CD4-positive, alpha-beta T cell (primary cell): ENCODE measurements at regions of chr12 and their contacts with region 1.

Region 1: GRCh38 chr12:57124259-57124877 is 3.9 kb upstream of the LRP1 start:
- DNase-seq: peak; percentile 56 to 89 (median 70)
- ATAC-seq: peak; percentile 73
- H3K4me3 ChIP-seq: no peak overlapping the region
- H3K4me3 Mint-ChIP-seq: peak overlapping the region; percentile 4
- H3K27ac ChIP-seq: no peak overlapping the region
- H3K27ac Mint-ChIP-seq: no peak overlapping the region
- H3K4me1 ChIP-seq: peaks cover 28% of the 10 kb centered on the region
- H3K4me1 Mint-ChIP-seq: peaks cover 13% of the 10 kb centered on the region
- H3K27me3 ChIP-seq: no peaks in the 10 kb centered on the region
- H3K27me3 Mint-ChIP-seq: no peaks in the 10 kb centered on the region
- CTCF ChIP-seq: peak; percentile 98

Region 2: DNA sequence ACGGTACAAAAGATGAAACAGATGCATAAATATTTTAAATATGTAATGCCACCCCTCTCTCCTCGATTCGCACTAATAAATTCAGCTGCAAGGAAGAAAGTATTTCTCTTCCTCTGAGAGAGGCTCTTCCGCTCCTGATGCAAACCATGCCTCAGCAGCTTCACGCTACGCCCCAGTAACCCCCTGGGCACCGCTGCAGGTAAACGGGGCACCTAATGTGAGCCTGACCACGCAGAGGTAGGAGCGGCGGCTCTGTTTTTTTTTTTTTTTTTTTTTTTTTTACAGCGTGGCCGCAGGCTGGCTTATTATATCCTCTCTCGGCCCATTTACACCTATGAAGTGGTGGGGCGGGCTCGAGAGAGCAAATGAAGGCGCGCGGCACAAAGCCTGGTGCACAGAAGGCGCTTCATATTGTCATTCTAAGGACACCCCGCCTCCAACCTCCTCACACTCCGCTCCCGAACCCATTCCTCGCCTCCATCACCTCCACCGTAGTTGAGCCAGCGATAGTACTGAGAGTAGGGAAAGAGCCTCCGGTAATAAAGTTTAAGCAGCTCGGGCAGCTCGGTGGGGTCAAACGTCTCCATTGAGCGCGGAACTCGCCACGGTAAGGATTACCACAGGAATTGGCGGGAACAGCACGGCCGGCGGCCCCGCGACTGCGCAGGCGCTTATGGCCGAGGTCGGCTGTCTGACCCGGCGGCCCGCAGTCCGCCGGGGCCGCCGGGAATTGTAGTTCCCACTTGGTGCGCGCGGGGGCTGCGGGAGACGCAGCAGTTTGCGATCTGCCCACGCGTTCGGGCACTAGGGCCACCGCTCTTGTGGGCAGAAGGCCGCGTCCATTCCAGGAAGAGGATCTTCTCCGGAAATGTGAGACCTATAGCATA is 372.4 kb before region 1 on chr12 and contains the start of gene PRIM1:
- CTCF ChIA-PET with region 1: no interaction called
- POLR2A ChIA-PET with region 1: no interaction called
- intact Hi-C with region 1: loop called in 1 of 2 experiments (anchors 5 kb)
- DNase-seq: peak; percentile 66 to 91 (median 78)
- ATAC-seq: peak; percentile 80
- H3K4me3 ChIP-seq: peak within 1 kb of the TSS; percentile 96
- H3K4me3 Mint-ChIP-seq: peak within 1 kb of the TSS; percentile 98
- H3K27ac ChIP-seq: peak within 1 kb of the TSS; percentile 68 to 80
- H3K27ac Mint-ChIP-seq: peak within 1 kb of the TSS; percentile 95
- H3K4me1 ChIP-seq: peaks cover 10% of the 10 kb centered on the region
- H3K4me1 Mint-ChIP-seq: peaks cover 33% of the 10 kb centered on the region
- H3K27me3 ChIP-seq: no peaks in the 10 kb centered on the region
- H3K27me3 Mint-ChIP-seq: no peaks in the 10 kb centered on the region
- CTCF ChIP-seq: peak; percentile 41
- total RNA-seq, gene PRIM1: 5.3 to 6.1 TPM

Region 3: GRCh38 chr12:57027011-57027804 is 97.2 kb before region 1 on chr12:
- CTCF ChIA-PET with region 1: no interaction called
- POLR2A ChIA-PET with region 1: no interaction called
- intact Hi-C with region 1: no loop called
- DNase-seq: peak in 1 of 14 experiments; percentile 39
- ATAC-seq: peak; percentile 39
- H3K4me3 ChIP-seq: no peak overlapping the region
- H3K4me3 Mint-ChIP-seq: no peak overlapping the region
- H3K27ac ChIP-seq: no peak overlapping the region
- H3K27ac Mint-ChIP-seq: peak overlapping the region; percentile 50
- H3K4me1 ChIP-seq: peaks cover 43% of the 10 kb centered on the region
- H3K4me1 Mint-ChIP-seq: peaks cover 72% of the 10 kb centered on the region
- H3K27me3 ChIP-seq: no peaks in the 10 kb centered on the region
- H3K27me3 Mint-ChIP-seq: no peaks in the 10 kb centered on the region
- CTCF ChIP-seq: no peak

Region 4: GRCh38 chr12:57069523-57069922 is 54.8 kb before region 1 on chr12:
- CTCF ChIA-PET with region 1: interaction called, 23 read pairs
- POLR2A ChIA-PET with region 1: interaction called, 3 read pairs
- intact Hi-C with region 1: no loop called
- DNase-seq: peak in 13 of 14 experiments; percentile 20 to 89 (median 51)
- ATAC-seq: peak; percentile 99
- H3K4me3 ChIP-seq: no peak overlapping the region
- H3K4me3 Mint-ChIP-seq: peak overlapping the region; percentile 18
- H3K27ac ChIP-seq: peak overlapping the region; percentile 34 to 38
- H3K27ac Mint-ChIP-seq: peak overlapping the region; percentile 81
- H3K4me1 ChIP-seq: peaks cover 9% of the 10 kb centered on the region
- H3K4me1 Mint-ChIP-seq: peaks cover 31% of the 10 kb centered on the region
- H3K27me3 ChIP-seq: no peaks in the 10 kb centered on the region
- H3K27me3 Mint-ChIP-seq: no peaks in the 10 kb centered on the region
- CTCF ChIP-seq: peak; percentile 87

Region 5: GRCh38 chr12:57175428-57176138 is 51.2 kb after region 1 on chr12:
- CTCF ChIA-PET with region 1: interaction called, 63 read pairs
- POLR2A ChIA-PET with region 1: no interaction called
- intact Hi-C with region 1: loop called (anchors 1 to 2 kb)
- DNase-seq: peak in 11 of 14 experiments; percentile 9 to 64 (median 28)
- ATAC-seq: no peak
- H3K4me3 ChIP-seq: no peak overlapping the region
- H3K4me3 Mint-ChIP-seq: no peak overlapping the region
- H3K27ac ChIP-seq: no peak overlapping the region
- H3K27ac Mint-ChIP-seq: no peak overlapping the region
- H3K4me1 ChIP-seq: no peaks in the 10 kb centered on the region
- H3K4me1 Mint-ChIP-seq: no peaks in the 10 kb centered on the region
- H3K27me3 ChIP-seq: no peaks in the 10 kb centered on the region
- H3K27me3 Mint-ChIP-seq: no peaks in the 10 kb centered on the region
- CTCF ChIP-seq: peak; percentile 53

Region 6: GRCh38 chr12:57182921-57183790 is 58.8 kb after region 1 on chr12:
- CTCF ChIA-PET with region 1: interaction called, 63 read pairs
- POLR2A ChIA-PET with region 1: interaction called, 6 read pairs
- intact Hi-C with region 1: loop called (anchors 1 kb)
- DNase-seq: peak; percentile 66 to 88 (median 79)
- ATAC-seq: peak; percentile 100
- H3K4me3 ChIP-seq: no peak overlapping the region
- H3K4me3 Mint-ChIP-seq: no peak overlapping the region
- H3K27ac ChIP-seq: no peak overlapping the region
- H3K27ac Mint-ChIP-seq: no peak overlapping the region
- H3K4me1 ChIP-seq: peaks cover 6% of the 10 kb centered on the region
- H3K4me1 Mint-ChIP-seq: no peaks in the 10 kb centered on the region
- H3K27me3 ChIP-seq: no peaks in the 10 kb centered on the region
- H3K27me3 Mint-ChIP-seq: no peaks in the 10 kb centered on the region
- CTCF ChIP-seq: peak; percentile 80

Region 7: GRCh38 chr12:57238854-57239554 is 114.6 kb after region 1 on chr12:
- CTCF ChIA-PET with region 1: interaction called, 8 read pairs
- POLR2A ChIA-PET with region 1: interaction called, 4 read pairs
- intact Hi-C with region 1: loop called (anchors 5 kb)
- DNase-seq: peak; percentile 74 to 95 (median 82)
- ATAC-seq: peak; percentile 59
- H3K4me3 ChIP-seq: peak overlapping the region; percentile 82
- H3K4me3 Mint-ChIP-seq: peak overlapping the region; percentile 96
- H3K27ac ChIP-seq: no peak overlapping the region
- H3K27ac Mint-ChIP-seq: peak overlapping the region; percentile 68
- H3K4me1 ChIP-seq: peaks cover 94% of the 10 kb centered on the region
- H3K4me1 Mint-ChIP-seq: peaks cover 90% of the 10 kb centered on the region
- H3K27me3 ChIP-seq: peaks cover 62 to 63% of the 10 kb centered on the region in 2 experiments
- H3K27me3 Mint-ChIP-seq: peaks cover 79% of the 10 kb centered on the region
- CTCF ChIP-seq: peak; percentile 100